ENCODE measurements at regions of chr16 and their contacts with region 1.

Region 1: DNA sequence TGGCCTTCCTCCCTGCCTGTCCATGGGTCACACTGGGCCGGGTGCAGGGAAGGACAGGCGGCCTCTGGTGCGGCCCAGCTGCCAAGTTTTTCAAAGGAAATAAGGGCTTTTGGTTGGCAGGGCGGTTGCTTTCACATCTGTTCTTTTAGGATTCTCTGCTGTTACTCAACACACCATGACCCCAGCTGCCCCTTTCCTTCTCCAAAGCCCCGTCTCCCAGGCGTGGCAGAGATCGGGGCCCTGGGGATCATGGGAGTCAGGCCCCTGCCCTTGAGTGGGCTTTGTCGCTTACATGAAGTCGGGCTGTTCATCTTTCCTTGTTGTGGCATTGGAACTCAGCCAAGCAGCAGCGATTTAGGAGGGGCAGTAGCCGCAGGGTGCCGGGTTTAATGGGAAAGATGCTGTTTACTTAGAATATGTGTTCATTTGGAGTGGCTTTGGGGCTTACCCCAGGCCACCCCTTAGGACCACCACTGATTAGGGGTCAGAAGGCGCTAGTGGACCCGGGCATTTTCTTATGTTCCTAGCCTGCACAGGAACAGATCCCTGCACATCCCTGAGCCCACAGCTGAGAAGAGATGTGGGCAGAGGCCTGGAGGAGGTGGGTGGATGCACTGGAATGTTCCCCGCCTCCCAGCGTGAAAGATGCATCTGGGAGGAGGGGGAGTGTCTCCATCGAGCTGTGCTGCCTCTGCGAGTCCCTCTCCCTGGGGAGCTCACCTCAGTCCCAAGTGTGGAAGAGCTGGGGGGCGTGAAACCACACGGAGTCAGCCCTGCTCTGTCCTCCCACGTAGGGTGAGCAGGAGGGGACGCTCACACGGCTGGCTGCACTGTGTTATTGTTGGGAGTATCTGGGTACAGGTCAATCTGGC is 6.8 kb upstream of the ADCY7 start:
- DNase-seq: peak; percentile 37 to 63
- ATAC-seq: peak; percentile 60 to 84 (median 76)
- H3K4me3 ChIP-seq: no peak overlapping the region
- H3K27ac ChIP-seq: peak overlapping the region in 7 of 10 donors; percentile 27 to 74 (median 35)
- H3K4me1 ChIP-seq: peaks cover 0 to 26% (median 16%) of the 10 kb centered on the region in 9 donors
- H3K27me3 ChIP-seq: peaks cover 0 to 22% (median 0%) of the 10 kb centered on the region in 7 donors
- CTCF ChIP-seq: no peak

Region 2: GRCh38 chr16:50326949-50327402 is 67.4 kb after region 1 on chr16:
- intact Hi-C with region 1: loop called in 1 of 10 experiments (anchors 10 kb)
- DNase-seq: no peak
- ATAC-seq: peak in 3 of 8 donors; percentile 28 to 55 (median 37)
- H3K4me3 ChIP-seq: no peak overlapping the region
- H3K27ac ChIP-seq: no peak overlapping the region
- H3K4me1 ChIP-seq: peaks cover 0 to 5% (median 0%) of the 10 kb centered on the region in 9 donors
- H3K27me3 ChIP-seq: no peaks in the 10 kb centered on the region
- CTCF ChIP-seq: peak in 6 of 9 donors; percentile 30 to 52 (median 45)

Region 3: DNA sequence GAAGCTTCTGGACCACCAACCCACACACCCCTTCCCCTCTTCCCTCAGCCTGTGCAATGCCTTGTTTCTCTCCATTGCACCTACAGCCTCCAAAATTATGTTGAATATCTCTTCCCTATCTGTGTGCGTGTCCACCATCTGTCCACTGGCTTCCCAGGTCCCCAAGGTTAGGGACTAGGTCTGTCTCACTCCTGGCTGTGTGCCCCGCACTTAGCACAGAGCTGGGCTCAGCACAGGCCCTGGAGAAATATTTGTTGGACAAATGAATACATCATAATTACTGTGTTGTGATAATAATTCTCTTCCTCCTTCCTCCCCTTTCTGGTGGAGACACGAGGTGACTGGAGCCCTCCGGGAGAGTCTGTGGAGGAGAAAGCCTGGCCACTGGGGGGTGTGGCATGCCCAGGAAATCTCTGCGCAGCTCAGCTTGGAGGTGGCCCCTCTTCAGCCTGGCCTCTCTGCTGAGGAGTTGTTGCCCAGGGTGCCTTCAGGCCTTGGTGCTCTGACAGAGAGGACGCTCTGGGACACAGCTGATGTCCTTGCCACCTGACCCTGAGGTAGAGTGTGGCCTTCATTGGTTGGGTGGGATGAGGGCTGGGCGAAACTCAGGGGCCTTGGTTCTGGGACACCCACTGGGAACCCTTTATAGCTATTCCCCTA is 112.5 kb after region 1 on chr16:
- intact Hi-C with region 1: no loop called
- DNase-seq: no peak
- ATAC-seq: peak in 6 of 8 donors; percentile 23 to 66 (median 46)
- H3K4me3 ChIP-seq: no peak overlapping the region
- H3K27ac ChIP-seq: peak overlapping the region in 5 of 10 donors; percentile 32 to 63 (median 60)
- H3K4me1 ChIP-seq: peaks cover 9 to 30% (median 13%) of the 10 kb centered on the region in 9 donors
- H3K27me3 ChIP-seq: no peaks in the 10 kb centered on the region
- CTCF ChIP-seq: peak in 7 of 9 donors; percentile 14 to 50 (median 34)

Region 4: GRCh38 chr16:50555952-50556673 is 296.5 kb after region 1 on chr16:
- intact Hi-C with region 1: no loop called
- DNase-seq: no peak
- ATAC-seq: no peak
- H3K4me3 ChIP-seq: no peak overlapping the region
- H3K27ac ChIP-seq: no peak overlapping the region
- H3K4me1 ChIP-seq: no peaks in the 10 kb centered on the region
- H3K27me3 ChIP-seq: no peaks in the 10 kb centered on the region
- CTCF ChIP-seq: no peak

Region 5: DNA sequence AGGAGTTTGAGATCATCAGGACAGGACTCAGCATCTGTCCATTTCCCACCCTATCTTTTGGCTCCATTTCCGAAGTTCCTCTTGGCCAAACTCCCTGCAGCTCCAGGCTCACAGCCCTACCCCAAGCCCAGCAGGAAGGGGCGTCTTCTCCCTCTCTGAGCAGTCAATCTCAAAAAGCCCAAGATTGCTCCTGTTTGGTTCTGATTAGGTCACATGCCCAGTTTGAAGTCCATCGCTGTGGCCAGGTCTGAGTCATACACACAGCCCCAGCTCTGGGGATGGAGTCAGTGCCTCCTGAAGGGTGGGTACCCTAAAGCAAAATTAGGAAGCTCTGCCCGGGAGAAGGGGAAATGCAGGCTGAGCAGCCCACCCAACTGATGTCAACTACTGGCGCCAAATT is 397.7 kb after region 1 on chr16:
- intact Hi-C with region 1: loop called in 1 of 10 experiments (anchors 10 kb)
- DNase-seq: no peak
- ATAC-seq: peak in 1 of 8 donors; percentile 34
- H3K4me3 ChIP-seq: no peak overlapping the region
- H3K27ac ChIP-seq: no peak overlapping the region
- H3K4me1 ChIP-seq: no peaks in the 10 kb centered on the region
- H3K27me3 ChIP-seq: peaks cover 0 to 5% (median 0%) of the 10 kb centered on the region in 7 donors
- CTCF ChIP-seq: no peak

Measured in heart right ventricle (tissue), 16 donors.